Left ventricle myocardium inferior (tissue), 1 donor: ENCODE measurements at regions of chr16 and their contacts with region 1.

Region 1: DNA sequence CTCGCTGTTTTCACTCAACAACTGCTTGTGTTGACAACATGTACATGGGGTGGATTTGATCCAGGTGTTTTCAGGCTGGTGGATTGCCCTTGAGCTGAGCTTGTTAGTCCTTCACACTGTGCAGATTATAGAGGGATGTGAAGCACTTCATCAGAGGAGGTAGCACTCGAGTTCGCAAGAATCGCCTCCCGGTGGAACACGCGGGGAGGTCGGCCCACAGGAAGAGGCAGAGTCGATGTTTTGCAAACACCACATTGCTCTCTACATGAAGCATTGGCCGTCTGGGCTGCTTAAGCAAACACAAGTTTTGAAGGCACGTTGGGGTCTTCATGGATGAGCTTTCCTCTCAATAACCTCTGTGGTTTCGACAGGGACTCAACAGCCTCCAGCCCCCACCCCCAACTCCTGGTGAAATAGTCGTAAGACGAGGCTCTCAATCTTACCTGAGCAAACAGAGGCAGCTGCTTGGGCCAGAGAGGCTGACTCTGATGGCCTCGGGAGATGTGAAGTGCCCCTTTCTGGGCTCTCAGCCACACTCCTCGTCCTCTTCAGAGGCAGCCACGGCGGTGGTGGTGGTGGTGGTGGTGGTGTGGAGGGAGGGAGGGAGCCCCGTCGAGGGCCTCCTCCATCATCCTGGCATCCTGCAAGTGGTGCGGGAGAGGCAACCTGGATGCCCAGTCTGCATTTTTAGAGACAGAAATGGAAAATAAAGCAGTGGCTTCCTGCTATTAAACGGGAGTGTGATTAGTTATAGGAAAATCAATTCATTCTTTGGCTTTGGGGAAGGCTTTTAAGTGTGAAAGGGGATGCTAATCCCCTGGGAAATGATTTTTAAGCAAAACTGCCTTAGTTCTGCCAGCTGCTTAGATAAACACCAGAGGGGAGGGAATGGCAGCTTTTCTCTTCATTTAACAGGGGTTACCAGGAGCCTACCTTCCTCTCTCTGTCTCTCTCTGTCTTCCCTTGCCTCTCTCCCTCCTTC is 552.5 kb upstream of the EEF2KMT start:
- DNase-seq: no peak
- H3K4me3 ChIP-seq: no peak overlapping the region
- H3K27ac ChIP-seq: no peak overlapping the region
- H3K4me1 ChIP-seq: no peaks in the 10 kb centered on the region
- H3K27me3 ChIP-seq: peaks cover 56% of the 10 kb centered on the region
- CTCF ChIP-seq: no peak

Region 2: GRCh38 chr16:5526826-5527225 is 123.2 kb before region 1 on chr16:
- intact Hi-C with region 1: no loop called
- DNase-seq: no peak
- H3K4me3 ChIP-seq: no peak overlapping the region
- H3K27ac ChIP-seq: no peak overlapping the region
- H3K4me1 ChIP-seq: no peaks in the 10 kb centered on the region
- H3K27me3 ChIP-seq: peaks cover 44% of the 10 kb centered on the region
- CTCF ChIP-seq: no peak

Region 3: DNA sequence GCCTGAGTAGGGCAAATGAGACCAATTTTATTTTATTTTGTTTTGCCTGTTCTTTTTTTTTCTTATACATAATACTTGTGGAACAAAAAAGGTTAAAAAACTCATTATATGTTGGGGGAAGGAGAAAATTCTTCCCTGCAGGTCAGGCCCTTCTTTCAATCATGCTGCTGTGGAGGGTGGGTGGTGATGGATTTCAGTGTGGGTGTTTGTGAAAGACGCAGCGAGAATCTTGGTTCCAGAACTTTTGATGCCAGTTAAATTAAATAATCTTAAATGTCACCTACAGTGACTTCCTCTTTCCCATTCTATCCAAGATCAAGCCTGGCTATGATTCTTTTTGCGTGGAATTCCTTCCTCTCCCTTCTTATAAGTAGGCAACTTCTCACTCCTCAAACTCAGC is 43.4 kb after region 1 on chr16:
- intact Hi-C with region 1: loop called (anchors 5 kb)
- DNase-seq: no peak
- H3K4me3 ChIP-seq: no peak overlapping the region
- H3K27ac ChIP-seq: no peak overlapping the region
- H3K4me1 ChIP-seq: no peaks in the 10 kb centered on the region
- H3K27me3 ChIP-seq: no peaks in the 10 kb centered on the region
- CTCF ChIP-seq: no peak